ENCODE measurements at regions of chr5 and their contacts with region 1.

Region 1: DNA sequence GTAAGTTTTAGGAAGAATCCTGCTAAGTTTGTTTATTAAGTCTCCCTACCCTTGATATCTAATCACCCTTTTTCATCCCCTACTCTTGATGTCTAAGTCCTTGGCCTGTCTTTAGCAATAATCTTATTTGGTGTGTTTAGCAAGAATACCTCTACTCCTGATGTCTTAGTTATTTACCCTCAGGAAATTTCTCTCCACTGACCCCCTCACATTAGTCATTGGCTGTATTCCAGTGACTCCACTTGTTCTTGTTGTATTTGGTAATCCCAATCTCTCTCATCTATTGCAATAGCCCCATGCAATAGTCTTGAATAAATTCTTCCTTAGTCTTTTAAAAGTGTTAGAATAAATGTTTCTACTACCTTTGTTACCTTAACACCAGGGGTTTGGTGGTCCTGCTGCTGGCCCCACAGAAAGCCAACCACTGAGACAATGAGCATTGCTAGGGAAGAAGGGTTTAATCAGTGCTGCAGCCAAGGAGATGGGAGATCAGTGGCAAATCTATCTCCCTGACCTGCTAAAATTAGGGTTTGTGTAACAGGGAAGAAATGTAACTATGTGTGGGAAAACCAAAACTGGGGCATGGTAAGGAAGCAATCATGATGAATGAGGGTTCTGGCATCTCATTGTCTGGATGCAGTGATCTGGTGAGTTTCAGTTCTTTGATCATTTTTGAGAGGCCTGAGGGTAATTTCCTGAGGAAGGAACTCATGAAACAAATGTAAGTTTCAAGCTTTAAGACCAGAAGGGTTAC is 236.4 kb upstream of the DAB2 start:
- DNase-seq: peak in 1 of 2 experiments; percentile 63
- H3K4me3 ChIP-seq: no peak overlapping the region
- H3K27ac ChIP-seq: peak overlapping the region; percentile 40
- H3K4me1 ChIP-seq: peaks cover 17% of the 10 kb centered on the region
- H3K27me3 ChIP-seq: no peaks in the 10 kb centered on the region
- CTCF ChIP-seq: no peak

Region 2: GRCh38 chr5:39202597-39203274 is 458.5 kb before region 1 on chr5:
- CTCF ChIA-PET with region 1: no interaction called
- POLR2A ChIA-PET with region 1: no interaction called
- intact Hi-C with region 1: no loop called
- DNase-seq: no peak
- H3K4me3 ChIP-seq: no peak overlapping the region
- H3K27ac ChIP-seq: no peak overlapping the region
- H3K4me1 ChIP-seq: peaks cover 10% of the 10 kb centered on the region
- H3K27me3 ChIP-seq: no peaks in the 10 kb centered on the region
- CTCF ChIP-seq: no peak

Region 3: DNA sequence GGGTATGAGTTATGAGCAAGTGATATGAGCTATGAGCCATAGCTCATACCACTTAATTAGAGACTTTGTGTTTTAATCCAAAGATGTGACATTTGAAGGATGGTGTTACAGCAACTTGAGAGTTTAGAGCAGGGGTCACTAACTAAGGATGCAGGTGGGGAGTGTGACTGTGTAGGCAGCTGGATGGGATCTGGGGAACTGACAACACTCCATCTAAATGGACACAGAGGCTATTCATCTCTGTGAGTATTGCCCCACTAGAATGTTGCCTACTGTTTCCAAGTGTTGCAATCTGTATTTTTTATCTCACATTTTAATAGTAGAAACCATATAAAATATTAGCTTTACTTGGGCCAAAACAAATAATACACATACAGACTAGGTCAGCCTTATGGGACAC is 251.7 kb after region 1 on chr5:
- CTCF ChIA-PET with region 1: no interaction called
- POLR2A ChIA-PET with region 1: interaction called, 33 read pairs
- intact Hi-C with region 1: no loop called
- DNase-seq: no peak
- H3K4me3 ChIP-seq: no peak overlapping the region
- H3K27ac ChIP-seq: no peak overlapping the region
- H3K4me1 ChIP-seq: no peaks in the 10 kb centered on the region
- H3K27me3 ChIP-seq: no peaks in the 10 kb centered on the region
- CTCF ChIP-seq: no peak

Measured in PC-9 (cell line).